ENCODE measurements at regions of chr10 and their contacts with region 1.

Region 1: GRCh38 chr10:62816331-62817120 is at the start of gene EGR2:
- DNase-seq: peak; percentile 99
- H3K4me3 ChIP-seq: peak within 1 kb of the TSS; percentile 88
- H3K27ac ChIP-seq: peak within 1 kb of the TSS; percentile 43
- H3K4me1 ChIP-seq: peaks cover 10% of the 10 kb centered on the region; the same call in 1 of the 2 replicates
- H3K27me3 ChIP-seq: 0 out of 2 replicates have a peak, but pooled peaks cover 4% of the 10 kb centered on the region
- total RNA-seq, gene EGR2: 0.76 and 1.1 TPM in 2 replicates

Region 2: DNA sequence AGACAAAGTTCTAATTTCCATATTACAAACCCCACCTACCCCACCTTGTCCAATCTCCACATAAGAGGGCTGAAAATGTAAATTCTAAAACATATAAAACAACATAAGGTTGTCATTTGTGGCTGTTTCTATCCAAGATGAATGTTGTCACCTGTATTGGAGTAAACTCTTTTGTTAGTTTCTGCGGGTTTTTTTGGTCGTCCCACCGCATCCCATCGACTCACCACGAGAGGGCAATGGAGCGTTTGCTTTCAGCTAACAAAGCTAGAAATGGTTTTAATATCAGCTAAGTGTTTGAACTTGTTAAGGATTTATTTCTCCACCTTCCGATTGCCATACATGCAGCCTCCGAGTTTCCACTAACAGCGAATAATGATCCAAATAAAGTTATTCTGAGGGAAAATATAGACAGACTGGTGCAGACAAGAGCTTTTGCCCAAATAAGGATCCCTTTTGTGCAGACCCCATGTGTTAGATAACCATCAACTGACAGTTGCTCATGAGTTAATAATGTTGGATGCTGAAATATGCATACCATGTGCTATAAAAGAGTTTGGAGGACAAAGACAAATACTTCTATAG is 777.8 kb before region 1 on chr10:
- in situ Hi-C with region 1: loop called (anchors 25 kb)
- DNase-seq: peak; percentile 88
- H3K4me3 ChIP-seq: peak overlapping the region; percentile 50
- H3K27ac ChIP-seq: 0 out of 2 replicates have a peak overlapping the region, but pooled peaks have one; percentile 8
- H3K4me1 ChIP-seq: peaks cover 58% of the 10 kb centered on the region
- H3K27me3 ChIP-seq: no peaks in the 10 kb centered on the region

Region 3: GRCh38 chr10:62456611-62457101 is 359.9 kb before region 1 on chr10:
- in situ Hi-C with region 1: loop called (anchors 25 kb)
- DNase-seq: peak; percentile 14
- H3K4me3 ChIP-seq: no peak overlapping the region
- H3K27ac ChIP-seq: no peak overlapping the region
- H3K4me1 ChIP-seq: peaks cover 33% of the 10 kb centered on the region
- H3K27me3 ChIP-seq: no peaks in the 10 kb centered on the region

Region 4: DNA sequence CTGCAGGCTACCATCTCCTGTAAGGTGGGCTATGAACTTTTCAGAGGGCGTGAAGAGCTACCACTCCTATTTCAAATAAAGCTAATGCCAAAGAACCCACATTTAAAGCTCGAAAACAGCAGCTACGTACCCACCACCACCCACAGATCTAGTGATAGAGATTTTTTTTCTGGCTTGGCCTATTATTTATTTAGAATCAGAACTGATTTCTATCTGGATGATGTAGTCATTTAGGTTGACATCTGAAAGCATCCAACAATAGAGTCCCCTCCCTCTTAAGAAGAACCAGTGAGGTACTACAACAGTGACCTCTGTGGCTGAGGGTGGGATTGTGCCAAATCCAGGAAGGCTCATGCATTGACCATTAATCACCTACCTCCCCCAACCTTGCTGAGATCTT is 125.8 kb before region 1 on chr10:
- in situ Hi-C with region 1: no loop called
- DNase-seq: no peak
- H3K4me3 ChIP-seq: no peak overlapping the region
- H3K27ac ChIP-seq: no peak overlapping the region
- H3K4me1 ChIP-seq: no peaks in the 10 kb centered on the region
- H3K27me3 ChIP-seq: no peaks in the 10 kb centered on the region

Measured in GM23248 (cell line).